Activated CD8-positive, alpha-beta T cell treated with anti-CD3 and anti-CD28 coated beads for 36 hours (primary cell): ENCODE measurements at regions of chr10 and their contacts with region 1.

Region 1: DNA sequence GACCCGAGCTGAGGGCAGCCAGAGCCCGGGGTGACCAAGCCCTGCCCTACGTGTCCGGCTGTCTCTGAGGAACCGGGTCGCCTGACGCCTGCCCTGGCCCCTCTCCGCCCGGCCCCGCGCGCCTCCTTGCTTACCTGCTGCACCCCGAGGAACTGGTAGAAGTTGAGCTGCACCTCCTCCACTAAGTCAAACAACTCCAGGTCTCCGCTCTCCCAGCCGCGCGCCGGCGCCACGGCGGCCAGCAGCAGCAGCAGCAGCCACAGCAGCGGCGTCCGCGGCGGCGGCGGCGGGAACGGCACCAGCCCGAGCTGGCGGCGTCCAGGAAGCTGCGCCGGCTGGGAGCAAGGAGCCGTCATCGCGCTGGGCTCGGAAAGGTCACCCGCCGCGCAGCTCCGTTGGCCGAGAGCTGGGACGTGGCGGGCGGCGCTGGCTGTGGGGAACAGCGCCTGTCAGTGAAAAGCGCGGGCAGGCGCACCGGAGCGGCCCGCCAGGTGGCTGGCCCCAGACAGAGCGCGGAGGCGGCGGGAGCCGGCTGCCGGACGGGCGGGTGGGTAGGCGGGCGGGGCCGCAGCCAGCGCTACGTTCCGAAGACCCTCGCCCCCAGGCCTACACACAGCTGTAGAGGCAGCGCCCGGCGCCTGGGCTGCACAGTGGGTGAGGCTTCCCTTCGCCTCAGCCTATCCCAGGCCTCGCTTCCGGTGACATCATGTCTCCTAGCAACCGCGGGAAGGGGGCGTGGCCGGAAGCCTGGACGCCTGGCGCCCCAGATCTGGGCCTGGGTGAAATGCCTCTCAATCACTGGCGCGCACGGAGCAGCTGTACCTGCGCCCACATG is at the start of gene DNAJC1:
- DNase-seq: peak; percentile 99
- ATAC-seq: peak; percentile 93
- H3K4me3 Mint-ChIP-seq: peak within 1 kb of the TSS; percentile 89
- H3K27ac Mint-ChIP-seq: peak within 1 kb of the TSS; percentile 92
- H3K4me1 Mint-ChIP-seq: peaks cover 27% of the 10 kb centered on the region
- H3K27me3 Mint-ChIP-seq: peaks cover 4% of the 10 kb centered on the region
- CTCF ChIP-seq: no peak
- total RNA-seq, gene DNAJC1: 19.3 to 23.7 TPM

Region 2: GRCh38 chr10:22054961-22055360 is 51.7 kb after region 1 on chr10:
- CTCF ChIA-PET with region 1: no interaction called
- POLR2A ChIA-PET with region 1: no interaction called
- intact Hi-C with region 1: no loop called
- DNase-seq: no peak
- ATAC-seq: no peak
- H3K4me3 Mint-ChIP-seq: no peak overlapping the region
- H3K27ac Mint-ChIP-seq: no peak overlapping the region
- H3K4me1 Mint-ChIP-seq: no peaks in the 10 kb centered on the region
- H3K27me3 Mint-ChIP-seq: peaks cover 2% of the 10 kb centered on the region
- CTCF ChIP-seq: no peak

Region 3: DNA sequence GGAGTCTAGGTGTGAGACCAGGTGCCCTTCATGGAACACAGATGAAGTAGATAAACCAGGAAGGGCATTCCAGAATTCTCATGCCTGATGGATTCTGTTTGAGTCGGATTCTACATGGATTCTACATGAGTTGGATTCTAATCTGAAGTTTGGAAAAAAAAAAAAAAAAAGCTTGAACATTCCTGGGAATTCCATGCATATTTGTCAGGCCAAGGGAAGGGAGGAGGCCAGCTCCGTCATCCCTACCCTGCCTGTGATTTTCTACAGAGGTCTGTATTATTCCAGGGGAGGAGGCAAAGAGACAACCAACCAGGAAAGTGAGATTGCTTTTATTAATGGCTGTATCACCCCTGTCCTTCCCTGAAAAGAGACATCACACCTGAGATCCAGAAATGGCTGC is 242.3 kb after region 1 on chr10:
- CTCF ChIA-PET with region 1: no interaction called
- POLR2A ChIA-PET with region 1: interaction called, 3 read pairs
- intact Hi-C with region 1: loop called (anchors 5 kb)
- DNase-seq: no peak
- ATAC-seq: no peak
- H3K4me3 Mint-ChIP-seq: no peak overlapping the region
- H3K27ac Mint-ChIP-seq: peak overlapping the region; percentile 55
- H3K4me1 Mint-ChIP-seq: peaks cover 40% of the 10 kb centered on the region
- H3K27me3 Mint-ChIP-seq: peaks cover 3% of the 10 kb centered on the region
- CTCF ChIP-seq: no peak